MCF 10A (cell line): ENCODE measurements at regions of chr2 and their contacts with region 1.

Region 1: GRCh38 chr2:218979846-218980734 is 4.9 kb downstream of the FEV start:
- DNase-seq: peak; percentile 78
- H3K4me3 Mint-ChIP-seq: peak overlapping the region; percentile 56
- H3K27ac Mint-ChIP-seq: no peak overlapping the region
- H3K4me1 Mint-ChIP-seq: peaks cover 15% of the 10 kb centered on the region
- H3K27me3 Mint-ChIP-seq: peaks cover 90% of the 10 kb centered on the region
- CTCF ChIP-seq: peak; percentile 89

Region 2: DNA sequence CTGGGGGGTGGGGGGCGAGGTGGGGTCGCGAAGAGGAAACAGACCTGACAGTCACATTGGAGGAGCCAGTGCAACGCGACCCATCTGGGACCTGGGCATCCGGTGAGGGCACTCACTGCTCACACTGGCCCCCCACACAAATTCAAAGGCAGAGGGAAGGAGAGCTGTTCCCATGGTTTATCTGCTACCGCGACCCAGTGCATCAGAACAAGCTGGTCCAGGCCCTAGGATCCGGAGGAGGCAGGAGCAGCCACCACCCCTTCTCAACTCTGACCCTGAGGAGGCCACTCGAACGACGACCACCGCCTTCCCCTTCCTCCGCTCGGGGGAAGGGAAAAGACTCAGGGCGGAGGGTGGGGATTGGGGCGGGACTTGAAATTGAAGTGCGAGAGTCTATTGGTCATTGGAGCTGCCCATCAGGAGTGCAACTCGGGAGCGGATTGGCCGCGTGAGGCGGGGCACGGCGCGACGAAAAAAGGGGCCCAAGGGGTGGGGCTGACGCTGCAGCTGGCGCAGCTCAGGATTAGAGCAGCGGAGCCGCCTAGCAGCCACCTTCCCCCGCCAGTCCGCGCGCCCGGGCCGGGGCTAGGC is 20.9 kb before region 1 on chr2 and contains the start of gene CDK5R2:
- CTCF ChIA-PET with region 1: interaction called, 16 read pairs
- POLR2A ChIA-PET with region 1: no interaction called
- intact Hi-C with region 1: no loop called
- DNase-seq: peak; percentile 82
- H3K4me3 Mint-ChIP-seq: peak within 1 kb of the TSS; percentile 70
- H3K27ac Mint-ChIP-seq: no peak within 1 kb of the TSS
- H3K4me1 Mint-ChIP-seq: peaks cover 13% of the 10 kb centered on the region
- H3K27me3 Mint-ChIP-seq: peaks cover 80% of the 10 kb centered on the region
- CTCF ChIP-seq: no peak
- total RNA-seq, gene CDK5R2: not detected in 2 replicates

Region 3: GRCh38 chr2:218995972-218996711 is 16.1 kb after region 1 on chr2:
- CTCF ChIA-PET with region 1: interaction called, 23 read pairs
- POLR2A ChIA-PET with region 1: interaction called, 4 read pairs
- intact Hi-C with region 1: no loop called
- DNase-seq: peak; percentile 82
- H3K4me3 Mint-ChIP-seq: peak overlapping the region; percentile 73
- H3K27ac Mint-ChIP-seq: no peak overlapping the region
- H3K4me1 Mint-ChIP-seq: peaks cover 15% of the 10 kb centered on the region
- H3K27me3 Mint-ChIP-seq: peaks cover 22% of the 10 kb centered on the region
- CTCF ChIP-seq: peak; percentile 84

Region 4: GRCh38 chr2:219344751-219345430 is 364.8 kb after region 1 on chr2:
- CTCF ChIA-PET with region 1: no interaction called
- POLR2A ChIA-PET with region 1: no interaction called
- intact Hi-C with region 1: no loop called
- DNase-seq: peak; percentile 13
- H3K4me3 Mint-ChIP-seq: no peak overlapping the region
- H3K27ac Mint-ChIP-seq: no peak overlapping the region
- H3K4me1 Mint-ChIP-seq: no peaks in the 10 kb centered on the region
- H3K27me3 Mint-ChIP-seq: peaks cover 20% of the 10 kb centered on the region
- CTCF ChIP-seq: no peak